Heart left ventricle (tissue), 16 donors: ENCODE measurements at regions of chr13 and their contacts with region 1.

Region 1: DNA sequence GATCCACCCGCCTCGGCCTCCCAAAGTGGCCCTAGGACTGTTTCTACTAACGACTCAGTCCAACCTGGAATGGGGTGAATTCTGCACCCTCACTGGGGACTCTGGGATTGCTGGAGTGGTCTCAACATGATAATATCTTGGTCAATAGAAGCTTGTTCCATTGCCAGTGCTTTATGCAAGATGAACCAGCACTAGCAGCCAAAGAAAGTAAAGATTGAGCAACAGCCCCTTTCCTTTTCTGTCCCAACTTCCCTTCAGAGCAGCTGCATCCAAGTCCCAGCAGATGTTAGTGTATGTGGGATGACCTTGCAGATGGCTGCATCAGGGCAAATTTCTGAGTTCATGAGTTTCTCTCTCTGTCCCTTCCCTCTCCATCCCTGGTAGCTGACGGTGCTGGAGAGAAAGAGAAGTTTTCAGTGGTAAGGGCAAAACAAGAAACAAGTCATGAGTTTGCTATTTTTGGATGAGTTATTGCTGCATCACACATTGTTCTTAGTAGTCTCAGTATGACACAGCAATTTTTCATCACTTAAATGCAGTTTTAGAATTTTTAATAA is 183.6 kb upstream of the EDNRB start:
- DNase-seq: peak in 4 of 5 donors; percentile 26 to 59 (median 52)
- ATAC-seq: peak; percentile 78 to 98 (median 94)
- H3K4me3 ChIP-seq: no peak overlapping the region
- H3K27ac ChIP-seq: peak overlapping the region in 7 of 12 donors; percentile 11 to 46 (median 13)
- H3K4me1 ChIP-seq: peaks cover 0 to 4% (median 0%) of the 10 kb centered on the region in 12 donors
- H3K27me3 ChIP-seq: no peaks in the 10 kb centered on the region
- CTCF ChIP-seq: no peak
- POLR2A ChIP-seq: no peak

Region 2: DNA sequence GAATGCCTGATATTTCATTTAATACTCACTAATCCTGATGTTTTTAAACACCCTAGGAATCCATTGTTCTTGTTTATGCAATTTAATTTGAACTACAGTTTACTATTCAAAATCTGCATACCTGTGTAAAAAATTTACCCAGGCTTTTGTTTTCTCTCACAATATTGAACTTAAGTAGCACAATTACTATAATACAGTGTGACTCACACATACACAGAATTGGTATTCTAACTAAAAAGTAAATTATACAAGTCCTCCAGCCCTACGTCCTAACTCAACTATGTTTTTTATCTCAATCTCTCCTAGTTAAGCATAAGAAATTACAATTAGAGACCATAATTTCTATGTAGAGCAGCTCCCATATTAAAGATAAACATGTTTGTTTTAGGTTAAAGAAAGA is 817.1 kb before region 1 on chr13:
- intact Hi-C with region 1: no loop called
- DNase-seq: no peak
- ATAC-seq: no peak
- H3K4me3 ChIP-seq: no peak overlapping the region
- H3K27ac ChIP-seq: no peak overlapping the region
- H3K4me1 ChIP-seq: peaks cover 0 to 8% (median 1%) of the 10 kb centered on the region in 12 donors
- H3K27me3 ChIP-seq: no peaks in the 10 kb centered on the region
- CTCF ChIP-seq: no peak
- POLR2A ChIP-seq: no peak

Region 3: GRCh38 chr13:77902319-77902963 is 199.8 kb before region 1 on chr13:
- intact Hi-C with region 1: no loop called
- DNase-seq: no peak
- ATAC-seq: no peak
- H3K4me3 ChIP-seq: no peak overlapping the region
- H3K27ac ChIP-seq: peak overlapping the region in 1 of 12 donors; percentile 4
- H3K4me1 ChIP-seq: peaks cover 0 to 13% (median 4%) of the 10 kb centered on the region in 12 donors
- H3K27me3 ChIP-seq: no peaks in the 10 kb centered on the region
- CTCF ChIP-seq: no peak
- POLR2A ChIP-seq: no peak

Region 4: GRCh38 chr13:77999746-78000145 is 102.5 kb before region 1 on chr13:
- intact Hi-C with region 1: loop called in 1 of 10 experiments (anchors 5 kb)
- DNase-seq: no peak
- ATAC-seq: no peak
- H3K4me3 ChIP-seq: no peak overlapping the region
- H3K27ac ChIP-seq: no peak overlapping the region
- H3K4me1 ChIP-seq: no peaks in the 10 kb centered on the region
- H3K27me3 ChIP-seq: no peaks in the 10 kb centered on the region
- CTCF ChIP-seq: no peak
- POLR2A ChIP-seq: no peak

Region 5: GRCh38 chr13:78015782-78016181 is 86.4 kb before region 1 on chr13:
- intact Hi-C with region 1: loop called in 1 of 10 experiments (anchors 10 kb)
- DNase-seq: no peak
- ATAC-seq: no peak
- H3K4me3 ChIP-seq: no peak overlapping the region
- H3K27ac ChIP-seq: no peak overlapping the region
- H3K4me1 ChIP-seq: no peaks in the 10 kb centered on the region
- H3K27me3 ChIP-seq: no peaks in the 10 kb centered on the region
- CTCF ChIP-seq: no peak
- POLR2A ChIP-seq: no peak